ENCODE measurements at regions of chr5 and their contacts with region 1.

Region 1: DNA sequence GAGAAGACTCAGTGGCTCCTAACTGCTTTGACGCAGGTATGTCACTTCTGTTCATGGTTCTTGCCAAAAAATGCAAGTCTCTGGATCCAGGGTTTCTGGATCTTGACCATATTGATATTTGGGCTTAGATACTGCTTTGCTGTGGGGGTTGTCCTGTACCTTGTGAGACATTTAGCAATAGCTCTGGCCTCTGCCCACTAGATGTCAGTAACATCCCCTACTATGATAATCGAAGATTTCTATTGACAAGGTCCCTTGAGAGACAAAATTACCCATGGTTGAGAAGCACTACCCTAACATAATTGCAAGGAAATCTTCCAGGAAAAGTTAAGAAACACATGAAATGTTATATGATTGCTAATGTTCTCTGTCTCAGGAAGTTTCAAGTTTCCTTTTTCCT is 285.4 kb downstream of the TMEM232 start:
- DNase-seq: peak; percentile 67
- ATAC-seq: peak; percentile 83
- H3K4me3 ChIP-seq: no peak overlapping the region
- H3K27ac ChIP-seq: no peak overlapping the region
- H3K4me1 ChIP-seq: no peaks in the 10 kb centered on the region
- H3K27me3 ChIP-seq: 0 out of 2 replicates have a peak, but pooled peaks cover 10% of the 10 kb centered on the region
- CTCF ChIP-seq: peak; percentile 74

Region 2: GRCh38 chr5:110496276-110496675 is 55.2 kb after region 1 on chr5:
- CTCF ChIA-PET with region 1: no interaction called
- POLR2A ChIA-PET with region 1: no interaction called
- intact Hi-C with region 1: loop called (anchors 1 kb)
- DNase-seq: peak; percentile 11
- ATAC-seq: no peak
- H3K4me3 ChIP-seq: no peak overlapping the region
- H3K27ac ChIP-seq: no peak overlapping the region
- H3K4me1 ChIP-seq: no peaks in the 10 kb centered on the region
- H3K27me3 ChIP-seq: 0 out of 2 replicates have a peak, but pooled peaks cover 6% of the 10 kb centered on the region
- CTCF ChIP-seq: peak; percentile 45; the same call in 1 of the 2 replicates

Region 3: DNA sequence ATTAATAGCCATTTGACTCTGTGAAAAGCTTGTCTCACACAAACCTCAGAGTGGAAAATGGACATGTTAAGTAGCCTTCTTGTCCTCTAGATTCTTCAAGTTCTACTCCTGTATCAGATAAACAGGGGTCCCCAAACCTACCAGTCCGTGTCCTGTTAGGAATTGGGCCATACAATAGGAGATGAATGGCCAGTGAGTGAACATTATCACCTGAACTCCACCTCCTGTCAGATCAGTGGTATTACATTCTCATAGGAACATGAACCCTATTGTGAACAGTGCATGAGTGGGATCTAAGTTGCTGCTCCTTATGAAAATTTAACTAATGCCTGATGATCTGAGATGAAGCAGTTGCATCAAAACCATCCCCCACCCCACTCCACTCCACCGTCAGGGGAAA is 149.2 kb after region 1 on chr5:
- CTCF ChIA-PET with region 1: no interaction called
- POLR2A ChIA-PET with region 1: no interaction called
- intact Hi-C with region 1: loop called (anchors 1 kb)
- DNase-seq: peak; percentile 52
- ATAC-seq: peak; percentile 93
- H3K4me3 ChIP-seq: no peak overlapping the region
- H3K27ac ChIP-seq: no peak overlapping the region
- H3K4me1 ChIP-seq: no peaks in the 10 kb centered on the region
- H3K27me3 ChIP-seq: peaks cover 7% of the 10 kb centered on the region; the same call in 1 of the 2 replicates
- CTCF ChIP-seq: peak; percentile 65

Region 4: GRCh38 chr5:110625376-110625999 is 184.5 kb after region 1 on chr5:
- CTCF ChIA-PET with region 1: no interaction called
- POLR2A ChIA-PET with region 1: no interaction called
- intact Hi-C with region 1: loop called (anchors 1 kb)
- DNase-seq: peak; percentile 70
- ATAC-seq: peak; percentile 40; the same call in 1 of the 2 replicates
- H3K4me3 ChIP-seq: no peak overlapping the region
- H3K27ac ChIP-seq: no peak overlapping the region
- H3K4me1 ChIP-seq: no peaks in the 10 kb centered on the region
- H3K27me3 ChIP-seq: peaks cover 19% of the 10 kb centered on the region
- CTCF ChIP-seq: peak; percentile 70

Region 5: DNA sequence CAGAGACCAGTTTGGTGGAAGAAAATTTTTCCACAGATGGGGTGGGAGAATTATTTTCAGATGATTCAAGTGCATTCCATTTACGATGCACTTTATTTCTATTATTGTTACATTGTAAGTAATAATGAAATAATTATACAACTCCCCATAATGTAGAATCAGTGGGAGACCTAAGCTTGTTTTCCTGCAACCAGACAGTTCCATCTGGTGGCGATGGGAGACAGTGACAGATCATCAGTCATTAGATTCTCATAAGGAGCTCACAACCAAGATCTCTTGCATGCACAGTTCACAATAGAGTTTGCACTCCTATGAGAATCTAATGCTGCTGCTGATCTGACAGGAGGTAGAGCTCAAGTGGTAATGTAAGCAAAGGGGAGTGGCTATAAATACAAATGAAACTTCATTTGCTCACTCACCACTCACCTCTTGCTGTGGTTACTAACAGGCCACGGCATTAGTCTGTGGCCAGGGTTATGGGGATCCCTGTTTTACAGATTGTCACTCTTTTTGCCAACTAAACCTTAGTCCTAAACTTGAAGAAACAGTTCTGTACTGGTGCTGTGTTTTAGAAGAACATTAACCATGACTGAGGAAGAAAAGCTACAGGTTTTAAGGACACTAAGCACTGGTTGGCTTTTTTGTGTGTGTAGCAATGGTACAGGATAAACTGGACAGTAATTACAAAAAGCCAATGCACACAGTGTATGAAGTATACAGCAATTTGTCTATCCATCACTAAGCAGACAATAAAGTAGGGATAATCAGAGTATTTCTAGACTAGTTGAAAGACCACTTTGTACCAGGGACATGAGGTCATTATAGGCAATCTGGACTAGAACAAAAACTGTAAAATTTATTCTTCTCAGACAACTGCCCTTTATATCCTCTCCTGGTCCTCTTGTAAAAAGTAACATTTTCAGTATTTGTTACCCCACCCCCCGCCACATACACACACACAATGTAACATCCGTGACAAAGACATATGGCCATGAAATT is 275.5 kb after region 1 on chr5:
- CTCF ChIA-PET with region 1: no interaction called
- POLR2A ChIA-PET with region 1: no interaction called
- intact Hi-C with region 1: loop called (anchors 5 kb)
- DNase-seq: no peak
- ATAC-seq: peak; percentile 35; the same call in 1 of the 2 replicates
- H3K4me3 ChIP-seq: no peak overlapping the region
- H3K27ac ChIP-seq: no peak overlapping the region
- H3K4me1 ChIP-seq: no peaks in the 10 kb centered on the region
- H3K27me3 ChIP-seq: peaks cover 9% of the 10 kb centered on the region; the same call in 1 of the 2 replicates
- CTCF ChIP-seq: 0 out of 2 replicates have a peak, but pooled peaks have one; percentile 29

Measured in PC-3 (cell line).